Mammary epithelial cell (primary cell): ENCODE measurements at regions of chr9 and their contacts with region 1.

Region 1: DNA sequence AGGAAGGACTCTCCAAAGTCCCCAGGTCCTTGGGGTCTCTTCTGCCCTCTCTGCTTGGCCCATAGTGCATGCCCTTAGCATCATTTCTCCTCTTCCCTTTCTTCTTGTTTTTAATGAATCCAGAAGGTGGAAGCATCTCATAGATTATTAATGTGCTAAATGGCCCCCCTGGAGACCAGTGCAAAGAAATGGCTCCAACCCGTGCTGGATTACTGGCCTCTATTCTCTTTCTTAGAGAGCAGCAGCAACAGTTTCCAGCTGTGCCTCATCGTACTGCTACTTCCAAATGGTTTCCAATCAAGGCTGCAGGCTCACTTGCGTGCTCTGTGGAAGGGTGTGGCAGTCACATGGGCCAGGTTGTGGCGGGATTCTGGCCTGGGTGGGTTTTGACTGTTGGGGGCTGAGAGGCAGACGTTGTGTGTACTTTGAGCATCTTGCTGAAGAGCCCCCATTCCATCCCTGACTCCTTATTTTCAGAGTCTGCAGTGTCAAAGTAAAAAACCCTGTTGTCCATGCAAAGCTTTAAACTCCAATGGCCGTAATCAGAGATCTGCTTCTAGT is 139.7 kb downstream of the GABBR2 start:
- DNase-seq: no peak
- H3K4me3 ChIP-seq: no peak overlapping the region
- H3K27ac ChIP-seq: no peak overlapping the region
- H3K4me1 ChIP-seq: no peaks in the 10 kb centered on the region
- H3K27me3 ChIP-seq: peaks cover 14% of the 10 kb centered on the region
- CTCF ChIP-seq: no peak

Region 2: GRCh38 chr9:98494852-98495251 is 74.1 kb before region 1 on chr9:
- CTCF ChIA-PET with region 1: no interaction called
- dilution Hi-C with region 1: loop called (anchors 5 kb)
- in situ Hi-C with region 1: no loop called
- intact Hi-C with region 1: no loop called
- DNase-seq: no peak
- H3K4me3 ChIP-seq: no peak overlapping the region
- H3K27ac ChIP-seq: no peak overlapping the region
- H3K4me1 ChIP-seq: no peaks in the 10 kb centered on the region
- H3K27me3 ChIP-seq: no peaks in the 10 kb centered on the region
- CTCF ChIP-seq: no peak